Mammary epithelial cell (primary cell): ENCODE measurements at regions of chr4 and their contacts with region 1.

Region 1: DNA sequence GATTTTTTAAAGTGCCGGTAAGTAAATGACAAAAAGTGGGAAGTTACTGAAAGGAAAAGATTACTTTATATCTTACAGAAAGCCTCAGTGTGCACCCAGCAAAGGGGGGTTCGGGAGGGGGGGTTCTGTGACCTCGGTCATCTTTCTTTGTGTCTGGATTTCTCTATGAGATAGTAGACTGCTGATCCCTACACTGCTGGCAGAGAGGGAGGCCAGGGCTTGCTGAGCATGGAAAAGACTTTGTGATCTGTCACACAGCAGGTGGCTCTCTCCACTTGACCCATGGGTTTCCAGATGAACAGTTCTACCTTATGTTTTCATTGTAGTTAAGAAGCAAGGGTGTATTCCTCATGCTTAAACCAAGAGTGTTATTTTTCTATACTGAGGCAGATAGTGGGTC is 475.6 kb downstream of the PCDH10 start:
- DNase-seq: no peak
- H3K4me3 ChIP-seq: no peak overlapping the region
- H3K27ac ChIP-seq: no peak overlapping the region
- H3K4me1 ChIP-seq: no peaks in the 10 kb centered on the region
- H3K27me3 ChIP-seq: peaks cover 2% of the 10 kb centered on the region
- CTCF ChIP-seq: no peak

Region 2: DNA sequence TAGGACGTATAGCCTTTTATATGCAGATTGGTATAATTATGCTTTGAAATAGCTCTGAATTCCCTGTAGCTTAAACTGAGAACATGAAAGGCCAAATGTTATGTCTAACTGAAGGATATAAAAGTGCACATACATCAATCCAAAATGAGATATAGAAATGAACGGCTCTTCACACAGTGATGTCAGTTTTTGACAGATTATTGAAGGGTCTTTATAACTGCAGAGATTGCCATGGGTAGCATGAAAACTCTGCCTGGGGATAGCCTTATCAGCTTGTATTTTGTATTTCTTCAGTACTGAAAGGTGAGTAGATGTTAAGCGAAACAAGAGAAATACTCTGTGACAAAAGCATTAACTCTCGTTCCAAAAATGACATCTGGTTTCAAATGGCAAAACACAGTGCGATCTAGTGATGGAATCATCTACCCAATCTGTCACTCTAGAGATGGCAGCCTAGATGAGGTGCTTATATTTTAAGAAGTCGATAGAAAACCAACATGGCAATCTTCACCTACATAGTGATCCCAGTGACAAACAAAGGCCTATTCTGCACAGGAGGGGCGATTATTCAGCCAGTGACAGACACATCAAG is 416.0 kb before region 1 on chr4:
- CTCF ChIA-PET with region 1: no interaction called
- dilution Hi-C with region 1: no loop called
- in situ Hi-C with region 1: no loop called
- intact Hi-C with region 1: loop called (anchors 5 kb)
- DNase-seq: no peak
- H3K4me3 ChIP-seq: no peak overlapping the region
- H3K27ac ChIP-seq: no peak overlapping the region
- H3K4me1 ChIP-seq: no peaks in the 10 kb centered on the region
- H3K27me3 ChIP-seq: no peaks in the 10 kb centered on the region
- CTCF ChIP-seq: no peak

Region 3: DNA sequence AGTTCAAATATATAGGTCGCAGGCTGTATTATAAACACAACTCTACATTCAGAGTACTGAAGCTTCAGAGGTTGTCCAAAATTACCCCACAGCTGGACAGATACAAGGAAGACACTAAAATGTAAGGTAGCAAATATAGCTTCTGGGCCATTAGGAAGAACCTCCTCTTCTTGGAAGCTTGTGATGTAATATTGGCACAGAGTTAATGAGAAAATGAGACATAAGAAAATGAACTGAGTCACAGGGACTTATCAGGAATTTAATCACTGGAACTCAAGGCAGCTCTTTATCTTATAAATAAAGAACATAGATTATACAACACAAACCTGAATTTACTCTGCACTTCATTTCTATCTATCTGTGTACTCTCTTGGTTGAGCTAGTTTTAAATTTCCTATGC is 131.0 kb before region 1 on chr4:
- CTCF ChIA-PET with region 1: no interaction called
- dilution Hi-C with region 1: no loop called
- in situ Hi-C with region 1: no loop called
- intact Hi-C with region 1: no loop called
- DNase-seq: no peak
- H3K4me3 ChIP-seq: no peak overlapping the region
- H3K27ac ChIP-seq: no peak overlapping the region
- H3K4me1 ChIP-seq: no peaks in the 10 kb centered on the region
- H3K27me3 ChIP-seq: no peaks in the 10 kb centered on the region
- CTCF ChIP-seq: no peak

Region 4: GRCh38 chr4:133668061-133668851 is 43.5 kb after region 1 on chr4:
- CTCF ChIA-PET with region 1: no interaction called
- dilution Hi-C with region 1: no loop called
- in situ Hi-C with region 1: no loop called
- intact Hi-C with region 1: no loop called
- DNase-seq: no peak
- H3K4me3 ChIP-seq: no peak overlapping the region
- H3K27ac ChIP-seq: no peak overlapping the region
- H3K4me1 ChIP-seq: no peaks in the 10 kb centered on the region
- H3K27me3 ChIP-seq: no peaks in the 10 kb centered on the region
- CTCF ChIP-seq: no peak